Aorta (tissue), 5 donors: ENCODE measurements at regions of chr1 and their contacts with region 1.

Region 1: GRCh38 chr1:223700942-223701637 is 11.2 kb upstream of the CAPN2 start:
- DNase-seq: peak; percentile 85
- ATAC-seq: peak; percentile 74
- H3K4me3 ChIP-seq: no peak overlapping the region
- H3K27ac ChIP-seq: peak overlapping the region; percentile 98 to 99
- H3K4me1 ChIP-seq: peaks cover 3 to 14% of the 10 kb centered on the region in 2 donors
- H3K27me3 ChIP-seq: no peaks in the 10 kb centered on the region

Region 2: GRCh38 chr1:223748773-223749733 is 48.0 kb after region 1 on chr1:
- intact Hi-C with region 1: loop called (anchors 2 kb)
- DNase-seq: peak; percentile 79 to 90
- ATAC-seq: peak; percentile 93
- H3K4me3 ChIP-seq: peak overlapping the region in 1 of 2 donors; percentile 21
- H3K27ac ChIP-seq: peak overlapping the region in 1 of 2 donors; percentile 43
- H3K4me1 ChIP-seq: no peaks in the 10 kb centered on the region
- H3K27me3 ChIP-seq: no peaks in the 10 kb centered on the region

Region 3: GRCh38 chr1:223845810-223846682 is 145.0 kb after region 1 on chr1 and contains the start of gene TP53BP2:
- intact Hi-C with region 1: loop called in 1 of 2 experiments (anchors 5 kb)
- DNase-seq: peak; percentile 92 to 95
- ATAC-seq: peak; percentile 95
- H3K4me3 ChIP-seq: peak within 1 kb of the TSS; percentile 77 to 84
- H3K27ac ChIP-seq: peak within 1 kb of the TSS; percentile 98 to 99
- H3K4me1 ChIP-seq: no peaks in the 10 kb centered on the region
- H3K27me3 ChIP-seq: no peaks in the 10 kb centered on the region
- total RNA-seq, gene TP53BP2: 60.6 to 83.9 TPM

Region 4: GRCh38 chr1:223887747-223888418 is 186.8 kb after region 1 on chr1:
- intact Hi-C with region 1: loop called in 1 of 2 experiments (anchors 5 kb)
- DNase-seq: peak; percentile 73 to 83
- ATAC-seq: peak; percentile 68
- H3K4me3 ChIP-seq: no peak overlapping the region
- H3K27ac ChIP-seq: peak overlapping the region; percentile 65 to 74
- H3K4me1 ChIP-seq: no peaks in the 10 kb centered on the region
- H3K27me3 ChIP-seq: no peaks in the 10 kb centered on the region

Region 5: DNA sequence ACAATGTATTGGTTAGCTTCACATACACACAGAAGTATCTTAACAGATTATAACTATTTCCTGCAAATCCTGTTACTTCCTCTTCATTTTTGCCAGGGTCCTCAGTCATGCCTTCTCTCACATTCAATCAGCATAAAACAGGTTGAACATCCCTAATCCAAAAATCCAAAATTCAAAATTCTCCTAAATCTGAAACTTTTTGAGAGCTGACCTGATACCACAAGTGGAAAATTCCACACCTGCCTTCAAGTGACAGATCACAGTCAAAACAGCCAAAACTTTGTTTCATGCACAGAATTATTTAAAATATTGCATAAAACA is 350.0 kb after region 1 on chr1:
- intact Hi-C with region 1: loop called in 1 of 2 experiments (anchors 2 kb)
- DNase-seq: no peak
- ATAC-seq: no peak
- H3K4me3 ChIP-seq: no peak overlapping the region
- H3K27ac ChIP-seq: no peak overlapping the region
- H3K4me1 ChIP-seq: no peaks in the 10 kb centered on the region
- H3K27me3 ChIP-seq: no peaks in the 10 kb centered on the region